Heart left ventricle (tissue), 16 donors: ENCODE measurements at regions of chr7 and their contacts with region 1.

Region 1: DNA sequence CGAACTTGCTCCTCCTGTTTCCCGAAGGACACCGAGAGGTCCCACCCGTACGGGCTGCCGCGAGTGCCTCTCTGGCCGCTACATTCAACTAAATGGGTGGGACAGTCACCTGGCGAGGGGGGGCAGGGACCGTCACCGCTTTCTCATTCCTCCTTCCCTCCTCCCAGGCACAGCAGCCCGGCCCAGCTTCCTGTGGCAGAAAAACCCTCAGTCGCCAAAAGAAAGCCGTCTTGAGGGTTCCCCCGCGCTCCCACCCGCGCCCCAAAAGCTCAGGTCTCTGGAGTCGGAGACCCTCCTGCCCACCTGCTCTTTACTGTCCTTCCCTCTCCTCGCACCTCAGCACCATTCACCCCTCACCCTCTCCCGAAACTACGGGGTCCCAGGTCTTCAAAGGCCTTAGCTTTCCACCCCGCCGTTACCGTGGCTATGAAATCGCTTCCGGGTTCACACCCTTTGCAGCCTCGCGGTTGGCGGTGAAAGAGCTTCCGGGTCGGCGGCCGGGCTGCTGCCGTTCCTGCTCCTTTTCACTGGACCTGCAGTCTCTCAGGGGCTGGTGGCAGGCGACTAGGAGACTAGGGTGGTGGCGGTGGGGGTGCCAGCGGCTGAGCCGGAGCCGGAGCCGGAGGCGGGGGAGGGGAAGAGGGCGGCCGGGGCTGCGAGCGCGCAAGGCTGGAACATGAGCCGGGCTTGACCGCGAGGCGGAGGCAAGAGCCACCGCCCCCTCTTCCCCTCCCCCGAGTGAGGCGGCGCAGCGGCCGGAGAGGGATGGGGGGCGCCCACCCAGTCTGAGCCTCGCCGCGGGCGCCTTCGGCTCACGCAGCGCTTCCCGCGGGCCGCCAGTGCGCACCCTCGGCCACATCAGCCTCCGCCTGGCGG is at the starts of genes ANKIB1 and KRIT1:
- DNase-seq: peak; percentile 89 to 94 (median 91)
- ATAC-seq: peak; percentile 90 to 97 (median 96)
- H3K4me3 ChIP-seq: peak within 1 kb of the TSS; percentile 67 to 94 (median 82)
- H3K27ac ChIP-seq: peak within 1 kb of the TSS; percentile 62 to 94 (median 90)
- H3K4me1 ChIP-seq: peaks cover 0 to 43% (median 30%) of the 10 kb centered on the region in 12 donors
- H3K27me3 ChIP-seq: no peaks in the 10 kb centered on the region
- CTCF ChIP-seq: peak in 7 of 12 donors; percentile 20 to 49 (median 27)
- POLR2A ChIP-seq: peak in 1 of 2 donors; percentile 63
- total RNA-seq, gene ANKIB1: 21.2 to 67.9 (median 46.6) TPM
- total RNA-seq, gene KRIT1: 22.1 to 45.0 (median 31.0) TPM

Region 2: DNA sequence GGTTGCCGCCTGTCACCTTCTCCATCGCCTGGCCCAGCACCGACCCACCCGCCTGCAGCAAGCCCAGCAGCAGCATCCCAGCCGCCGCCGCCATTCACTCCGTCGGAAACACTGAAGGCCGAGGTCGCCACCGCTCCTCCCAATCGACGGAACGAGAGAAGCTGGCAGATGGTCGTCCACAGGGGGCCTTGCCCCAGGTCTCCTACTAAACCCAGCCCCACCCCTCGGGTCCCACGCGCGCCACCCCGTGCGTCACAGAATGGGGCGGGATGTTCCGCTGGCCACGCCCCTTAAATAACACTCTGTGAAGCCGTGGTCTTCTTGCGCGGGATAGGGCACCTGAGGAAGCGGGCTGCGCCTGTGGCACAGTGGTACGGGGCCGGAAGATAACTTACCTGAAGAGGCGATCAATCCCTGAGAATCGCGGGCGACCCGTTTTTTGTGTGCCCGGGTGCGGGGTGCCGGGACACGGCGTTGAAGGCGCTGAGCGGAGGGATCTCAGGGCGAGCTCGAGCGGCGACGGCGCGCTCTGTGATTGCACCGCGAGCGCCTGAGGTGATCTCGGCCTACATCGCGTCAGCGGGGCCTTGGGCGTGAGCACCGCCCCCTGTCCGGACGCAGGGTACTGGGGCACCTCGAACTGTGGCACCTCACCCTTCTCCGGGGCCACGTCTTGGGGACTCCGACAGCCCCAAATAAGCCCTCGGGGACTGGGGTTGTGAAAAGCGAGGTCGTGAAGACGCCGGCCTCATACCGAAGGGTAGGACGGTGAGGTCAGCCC is 111.3 kb before region 1 on chr7 and contains the start of gene CYP51A1:
- intact Hi-C with region 1: loop called in 1 of 10 experiments (anchors 5 kb)
- DNase-seq: peak; percentile 93 to 95 (median 94)
- ATAC-seq: peak; percentile 95 to 98 (median 98)
- H3K4me3 ChIP-seq: peak within 1 kb of the TSS; percentile 72 to 99 (median 94)
- H3K27ac ChIP-seq: peak within 1 kb of the TSS; percentile 62 to 97 (median 96)
- H3K4me1 ChIP-seq: peaks cover 0 to 26% (median 16%) of the 10 kb centered on the region in 12 donors
- H3K27me3 ChIP-seq: no peaks in the 10 kb centered on the region
- CTCF ChIP-seq: peak in 4 of 12 donors; percentile 8 to 38 (median 22)
- POLR2A ChIP-seq: peak; percentile 40 to 64
- total RNA-seq, gene CYP51A1: 16.6 to 42.2 (median 32.7) TPM

Region 3: DNA sequence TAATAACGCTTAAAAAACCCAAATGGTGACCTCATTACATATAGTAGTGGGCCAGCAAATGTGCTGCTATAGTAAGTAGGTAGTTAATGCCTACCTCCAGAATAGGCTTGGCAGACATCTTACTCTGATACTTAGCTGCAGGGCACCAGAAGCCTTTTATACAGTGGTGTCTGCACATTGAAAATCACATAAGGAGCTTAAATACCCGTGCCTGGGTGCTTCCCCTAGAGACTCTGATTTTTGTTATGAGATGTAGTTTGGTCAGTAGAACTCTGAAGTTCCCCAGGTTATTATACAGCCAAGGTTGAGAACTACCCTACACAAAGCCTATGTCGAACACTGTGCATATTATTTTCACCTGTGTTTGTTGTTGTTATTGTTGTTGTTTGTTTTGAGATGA is 47.3 kb after region 1 on chr7:
- intact Hi-C with region 1: loop called in 4 of 10 experiments (anchors 5 to 10 kb)
- DNase-seq: no peak
- ATAC-seq: peak in 1 of 4 donors; percentile 35
- H3K4me3 ChIP-seq: no peak overlapping the region
- H3K27ac ChIP-seq: peak overlapping the region in 4 of 12 donors; percentile 11 to 52 (median 38)
- H3K4me1 ChIP-seq: peaks cover 0 to 32% (median 18%) of the 10 kb centered on the region in 12 donors
- H3K27me3 ChIP-seq: no peaks in the 10 kb centered on the region
- CTCF ChIP-seq: no peak
- POLR2A ChIP-seq: no peak